Prostate gland (tissue), 2 donors: ENCODE measurements at regions of chr4 and their contacts with region 1.

Region 1: DNA sequence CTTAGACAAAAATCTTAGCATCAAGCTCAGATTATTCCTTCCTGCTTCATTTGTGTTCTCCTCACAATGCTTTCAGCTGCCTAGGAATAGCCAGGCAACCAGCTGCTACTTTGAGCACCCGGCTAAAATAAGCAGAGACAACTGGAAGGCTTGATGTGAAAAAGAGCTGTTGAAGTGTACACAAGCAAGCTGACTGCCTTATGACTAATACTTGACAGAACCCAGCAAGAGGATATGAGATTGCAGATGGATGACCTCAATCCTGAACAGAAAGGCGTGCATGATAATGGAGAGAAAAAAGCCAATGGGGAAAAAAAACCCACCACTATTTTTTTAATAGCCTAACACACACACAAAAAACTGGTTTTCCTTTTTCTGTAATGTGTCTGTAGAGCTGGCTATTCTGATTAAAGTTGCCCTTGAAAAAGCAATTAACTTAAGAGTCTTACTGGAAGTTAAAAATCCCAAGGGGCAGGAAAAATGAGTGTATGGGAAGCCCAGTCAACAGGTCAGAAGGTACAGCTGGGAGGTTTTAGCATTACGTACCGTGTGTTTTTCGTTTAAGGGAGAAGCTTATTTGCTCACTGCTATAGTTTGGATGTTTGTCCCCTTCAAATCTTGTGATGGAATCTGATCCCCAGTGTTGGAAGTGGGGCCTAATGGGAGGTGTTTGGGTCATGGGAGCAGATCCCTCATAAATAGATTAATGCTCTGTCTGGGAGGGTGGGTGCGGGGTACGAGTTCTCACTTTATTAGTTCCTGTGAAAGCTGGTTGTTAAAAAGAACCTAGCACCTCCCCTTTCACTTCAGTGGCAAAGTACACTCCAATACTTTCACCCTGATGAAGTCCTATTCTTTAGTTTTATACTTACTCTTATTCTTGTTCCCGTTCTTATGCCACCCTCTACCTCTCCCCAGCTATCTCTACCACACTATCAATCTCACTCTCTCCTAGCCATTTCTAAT is 37.1 kb upstream of the HERC6 start:
- DNase-seq: peak; percentile 8
- H3K4me3 ChIP-seq: no peak overlapping the region
- H3K27ac ChIP-seq: peak overlapping the region in 1 of 2 donors; percentile 41
- H3K4me1 ChIP-seq: no peaks in the 10 kb centered on the region
- H3K27me3 ChIP-seq: no peaks in the 10 kb centered on the region
- CTCF ChIP-seq: no peak
- POLR2A ChIP-seq: no peak

Region 2: GRCh38 chr4:88090898-88091297 is 250.6 kb before region 1 on chr4:
- intact Hi-C with region 1: no loop called
- DNase-seq: no peak
- H3K4me3 ChIP-seq: no peak overlapping the region
- H3K27ac ChIP-seq: no peak overlapping the region
- H3K4me1 ChIP-seq: no peaks in the 10 kb centered on the region
- H3K27me3 ChIP-seq: no peaks in the 10 kb centered on the region
- CTCF ChIP-seq: no peak
- POLR2A ChIP-seq: no peak

Region 3: DNA sequence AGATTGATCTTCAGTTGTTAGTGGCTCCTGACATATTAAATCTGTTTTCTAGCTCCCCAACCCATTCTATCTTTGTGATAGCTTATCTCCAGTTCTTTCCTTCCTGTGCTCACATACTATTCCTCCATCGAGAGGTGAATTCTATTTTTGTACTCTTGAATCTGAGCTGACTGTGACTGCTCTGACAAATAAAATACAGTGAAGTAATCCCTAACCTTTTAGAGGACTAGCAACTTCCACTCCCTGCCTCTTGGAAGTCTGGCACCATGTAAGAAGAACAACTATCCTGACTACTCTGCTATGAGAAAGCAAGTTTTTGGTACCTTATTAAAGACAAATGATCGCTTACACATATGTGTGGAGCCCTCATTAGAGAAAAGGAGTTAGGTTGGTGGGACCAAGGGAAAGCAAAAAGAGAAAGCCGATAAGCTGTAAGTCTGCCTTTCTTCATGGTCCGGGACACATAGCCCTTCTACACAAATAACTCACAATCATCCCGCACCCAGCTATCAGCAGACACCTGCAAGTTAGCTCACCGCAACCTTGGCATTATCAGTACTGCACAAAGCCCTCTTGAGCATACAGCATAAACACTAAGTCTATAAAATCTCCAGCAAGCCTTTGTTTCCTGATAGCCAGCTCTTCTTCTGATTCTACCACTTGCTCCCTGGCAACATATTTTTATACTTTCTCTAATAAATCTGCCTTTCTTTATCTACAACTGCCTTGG is 43.6 kb before region 1 on chr4:
- intact Hi-C with region 1: loop called (anchors 5 kb)
- DNase-seq: no peak
- H3K4me3 ChIP-seq: no peak overlapping the region
- H3K27ac ChIP-seq: no peak overlapping the region
- H3K4me1 ChIP-seq: no peaks in the 10 kb centered on the region
- H3K27me3 ChIP-seq: no peaks in the 10 kb centered on the region
- CTCF ChIP-seq: no peak
- POLR2A ChIP-seq: no peak

Region 4: GRCh38 chr4:88523325-88524129 is 182.0 kb after region 1 on chr4 and contains the start of gene PYURF:
- intact Hi-C with region 1: no loop called
- DNase-seq: peak; percentile 93
- H3K4me3 ChIP-seq: peak within 1 kb of the TSS; percentile 77 to 85
- H3K27ac ChIP-seq: peak within 1 kb of the TSS; percentile 89
- H3K4me1 ChIP-seq: peaks cover 6% of the 10 kb centered on the region
- H3K27me3 ChIP-seq: no peaks in the 10 kb centered on the region
- CTCF ChIP-seq: peak in 1 of 4 experiments; percentile 27
- POLR2A ChIP-seq: peak; percentile 94
- total RNA-seq, gene PYURF: 84.5 to 133 TPM